ENCODE measurements at regions of chr5 and their contacts with region 1.

Region 1: GRCh38 chr5:107571621-107572536 is 98.9 kb downstream of the EFNA5 start:
- DNase-seq: peak; percentile 89 to 91
- ATAC-seq: peak; percentile 86 to 95 (median 92)
- H3K4me3 ChIP-seq: peak overlapping the region in 9 of 10 donors; percentile 22 to 57 (median 47)
- H3K27ac ChIP-seq: peak overlapping the region; percentile 58 to 92 (median 82)
- H3K4me1 ChIP-seq: peaks cover 0 to 49% (median 26%) of the 10 kb centered on the region in 9 donors
- H3K27me3 ChIP-seq: peaks cover 0 to 4% (median 0%) of the 10 kb centered on the region in 7 donors
- CTCF ChIP-seq: peak; percentile 82 to 95 (median 94)

Region 2: DNA sequence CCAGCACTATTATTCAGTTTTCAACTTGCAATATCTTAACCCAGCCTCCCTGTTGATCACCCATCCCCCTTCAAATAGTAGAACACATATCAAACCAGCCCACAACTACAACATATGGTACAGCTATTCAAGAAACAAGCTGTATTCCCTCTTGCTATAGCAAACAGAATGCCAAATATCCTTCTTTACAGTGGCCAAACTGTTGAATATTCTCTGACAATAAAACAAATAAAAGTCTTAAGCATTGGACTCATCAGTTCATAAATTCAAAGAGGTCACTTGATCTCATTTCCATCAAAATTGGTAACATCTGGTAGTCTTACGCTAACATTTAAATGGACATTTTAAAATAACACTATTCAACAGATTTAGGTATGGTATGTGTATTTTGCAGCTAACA is 252.0 kb before region 1 on chr5:
- intact Hi-C with region 1: loop called in 1 of 10 experiments (anchors 10 kb)
- DNase-seq: no peak
- ATAC-seq: no peak
- H3K4me3 ChIP-seq: no peak overlapping the region
- H3K27ac ChIP-seq: no peak overlapping the region
- H3K4me1 ChIP-seq: peaks cover 0 to 4% (median 0%) of the 10 kb centered on the region in 9 donors
- H3K27me3 ChIP-seq: no peaks in the 10 kb centered on the region
- CTCF ChIP-seq: no peak

Region 3: GRCh38 chr5:107389130-107389774 is 182.6 kb before region 1 on chr5:
- intact Hi-C with region 1: loop called in 2 of 10 experiments (anchors 2 to 10 kb)
- DNase-seq: no peak
- ATAC-seq: peak; percentile 46 to 90 (median 79)
- H3K4me3 ChIP-seq: no peak overlapping the region
- H3K27ac ChIP-seq: peak overlapping the region in 8 of 10 donors; percentile 22 to 74 (median 64)
- H3K4me1 ChIP-seq: peaks cover 0 to 35% (median 25%) of the 10 kb centered on the region in 9 donors
- H3K27me3 ChIP-seq: no peaks in the 10 kb centered on the region
- CTCF ChIP-seq: peak in 5 of 9 donors; percentile 17 to 41 (median 36)